ENCODE measurements at regions of chrX and their contacts with region 1.

Region 1: DNA sequence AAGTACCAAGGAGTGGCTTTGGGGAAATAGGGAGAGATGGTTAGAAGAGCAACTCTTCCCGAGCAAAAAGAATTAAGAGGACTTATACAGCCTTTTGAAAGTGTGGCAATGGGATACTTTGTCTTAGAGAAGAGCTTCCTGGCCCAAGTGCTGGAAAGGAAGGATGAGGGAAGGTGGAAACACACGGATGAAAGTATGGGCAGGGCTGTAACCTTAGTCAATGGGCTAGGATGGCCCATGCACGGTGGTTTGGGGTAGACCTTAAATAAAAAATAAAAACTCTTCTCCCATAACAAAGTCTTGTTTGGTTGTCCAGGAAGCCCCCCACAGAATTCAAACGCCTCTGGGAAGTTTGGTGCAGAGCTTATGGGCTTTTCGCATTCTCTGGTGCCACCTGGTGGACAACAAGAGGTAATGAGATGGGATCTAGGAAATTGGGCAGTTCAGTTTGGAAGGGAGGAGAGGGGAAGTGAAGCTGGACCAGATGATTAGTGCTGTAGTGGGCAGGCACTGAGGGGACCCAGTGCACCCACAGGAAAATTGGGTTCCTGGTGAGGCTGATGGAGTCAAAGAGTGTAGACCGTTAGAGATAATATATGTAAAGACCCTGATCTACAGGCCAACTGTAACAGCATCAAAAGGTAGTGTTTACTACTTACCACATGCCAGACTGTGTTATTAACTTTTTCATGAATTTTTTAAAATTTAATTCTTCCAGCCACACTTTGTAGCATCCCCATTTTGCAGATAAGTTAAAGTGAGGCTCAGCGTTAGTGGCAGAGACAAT is 13.8 kb upstream of the ENOX2 start:
- DNase-seq: peak in 1 of 3 donors; percentile 33
- ATAC-seq: peak; percentile 67
- H3K4me3 ChIP-seq: no peak overlapping the region
- H3K4me1 ChIP-seq: no peaks in the 10 kb centered on the region
- CTCF ChIP-seq: peak; percentile 13

Region 2: GRCh38 chrX:130539721-130540321 is 377.0 kb before region 1 on chrX:
- intact Hi-C with region 1: loop called (anchors 5 kb)
- DNase-seq: peak in 2 of 3 donors; percentile 32 to 41
- ATAC-seq: peak; percentile 51
- H3K4me3 ChIP-seq: no peak overlapping the region
- H3K4me1 ChIP-seq: no peaks in the 10 kb centered on the region
- CTCF ChIP-seq: peak; percentile 41

Measured in mucosa of descending colon (tissue), 3 donors.